ENCODE measurements at regions of chr12 and their contacts with region 1.

Region 1: GRCh38 chr12:4763549-4763948 is 43.3 kb downstream of the GALNT8 start:
- DNase-seq: no peak
- H3K4me3 ChIP-seq: no peak overlapping the region
- H3K4me3 Mint-ChIP-seq: no peak overlapping the region
- H3K27ac Mint-ChIP-seq: no peak overlapping the region
- H3K4me1 ChIP-seq: no peaks in the 10 kb centered on the region
- H3K4me1 Mint-ChIP-seq: no peaks in the 10 kb centered on the region
- H3K27me3 ChIP-seq: no peaks in the 10 kb centered on the region
- H3K27me3 Mint-ChIP-seq: peaks cover 22% of the 10 kb centered on the region
- CTCF ChIP-seq: no peak

Region 2: DNA sequence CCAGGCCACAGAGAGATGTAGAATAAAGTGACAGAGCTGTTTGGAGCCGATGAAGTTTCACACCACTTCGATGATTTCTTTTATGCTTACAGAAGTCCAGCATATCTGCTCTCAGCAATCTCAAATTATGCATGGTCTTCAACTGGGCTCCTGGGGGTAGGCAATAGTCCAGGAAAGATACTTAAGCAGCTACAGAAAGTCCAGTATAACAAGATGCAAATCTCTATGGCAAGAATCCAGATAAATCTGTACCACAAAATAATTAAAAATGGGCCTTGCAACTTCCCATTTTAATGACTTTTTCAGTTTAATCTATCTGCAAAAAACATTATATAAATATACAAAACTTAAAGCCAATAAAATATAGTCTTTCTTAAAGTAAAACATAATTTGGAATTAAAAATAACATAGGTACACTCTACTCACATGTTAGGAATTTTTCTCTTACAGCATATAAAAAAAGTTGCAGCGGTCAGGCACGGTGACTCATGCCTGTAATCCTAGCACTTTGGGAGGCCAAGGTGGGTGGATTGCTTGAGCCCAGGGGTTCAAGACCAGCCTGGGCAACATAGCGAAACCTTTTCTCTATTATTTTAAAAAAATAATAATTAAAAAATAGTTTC is 245.3 kb before region 1 on chr12:
- CTCF ChIA-PET with region 1: no interaction called
- POLR2A ChIA-PET with region 1: no interaction called
- intact Hi-C with region 1: no loop called
- DNase-seq: no peak
- H3K4me3 ChIP-seq: no peak overlapping the region
- H3K4me3 Mint-ChIP-seq: no peak overlapping the region
- H3K27ac Mint-ChIP-seq: no peak overlapping the region
- H3K4me1 ChIP-seq: no peaks in the 10 kb centered on the region
- H3K4me1 Mint-ChIP-seq: no peaks in the 10 kb centered on the region
- H3K27me3 ChIP-seq: no peaks in the 10 kb centered on the region
- H3K27me3 Mint-ChIP-seq: no peaks in the 10 kb centered on the region
- CTCF ChIP-seq: no peak

Region 3: DNA sequence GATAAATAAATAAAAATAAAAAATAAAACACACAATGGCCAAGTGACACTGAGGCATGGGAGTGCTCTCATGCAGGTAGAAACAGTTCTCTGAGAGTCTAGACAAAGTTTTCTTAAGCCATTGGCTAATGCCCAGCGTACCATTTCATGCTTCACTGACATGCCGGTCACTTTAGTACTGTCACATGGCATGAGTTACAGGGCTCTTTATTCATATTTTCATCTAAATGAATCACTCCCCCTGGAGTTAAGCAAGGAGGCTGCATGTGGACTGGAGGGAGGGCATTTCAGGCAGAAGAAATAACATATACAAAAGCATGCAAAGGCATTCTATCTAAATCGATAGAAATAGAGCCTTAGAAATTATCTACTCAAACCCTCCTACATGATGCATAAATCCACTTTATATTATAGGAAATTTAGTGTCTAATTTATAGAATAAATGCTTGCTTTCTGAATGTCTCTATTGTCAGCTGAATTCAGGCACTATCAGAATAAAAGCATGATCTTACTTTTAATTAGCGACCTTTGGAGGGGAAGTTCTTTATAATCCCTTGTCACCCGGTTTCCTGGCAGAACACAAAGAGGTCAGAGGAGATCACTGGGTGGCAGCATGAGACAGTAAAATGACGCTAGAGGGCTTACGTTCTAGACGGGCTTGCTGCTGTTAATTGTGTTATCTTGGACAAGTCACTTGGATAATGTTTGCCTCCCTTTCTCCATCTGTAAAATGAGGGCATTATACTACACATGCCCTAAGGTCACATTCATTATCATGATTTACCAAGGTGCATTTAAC is 184.0 kb before region 1 on chr12:
- CTCF ChIA-PET with region 1: interaction called, 11 read pairs
- POLR2A ChIA-PET with region 1: no interaction called
- intact Hi-C with region 1: loop called (anchors 1 kb)
- DNase-seq: peak; percentile 54 to 55
- H3K4me3 ChIP-seq: no peak overlapping the region
- H3K4me3 Mint-ChIP-seq: no peak overlapping the region
- H3K27ac Mint-ChIP-seq: no peak overlapping the region
- H3K4me1 ChIP-seq: no peaks in the 10 kb centered on the region
- H3K4me1 Mint-ChIP-seq: no peaks in the 10 kb centered on the region
- H3K27me3 ChIP-seq: no peaks in the 10 kb centered on the region; the same call in 1 of the 2 replicates
- H3K27me3 Mint-ChIP-seq: peaks cover 40% of the 10 kb centered on the region
- CTCF ChIP-seq: peak; percentile 59 to 62

Region 4: GRCh38 chr12:4604684-4605193 is 158.8 kb before region 1 on chr12:
- CTCF ChIA-PET with region 1: interaction called, 5 read pairs
- POLR2A ChIA-PET with region 1: no interaction called
- intact Hi-C with region 1: loop called (anchors 1 kb)
- DNase-seq: peak; percentile 69 to 72
- H3K4me3 ChIP-seq: peak overlapping the region; percentile 43
- H3K4me3 Mint-ChIP-seq: peak overlapping the region; percentile 78
- H3K27ac Mint-ChIP-seq: no peak overlapping the region
- H3K4me1 ChIP-seq: peaks cover 13% of the 10 kb centered on the region
- H3K4me1 Mint-ChIP-seq: peaks cover 22% of the 10 kb centered on the region
- H3K27me3 ChIP-seq: no peaks in the 10 kb centered on the region
- H3K27me3 Mint-ChIP-seq: peaks cover 24% of the 10 kb centered on the region
- CTCF ChIP-seq: peak; percentile 94 to 96

Region 5: DNA sequence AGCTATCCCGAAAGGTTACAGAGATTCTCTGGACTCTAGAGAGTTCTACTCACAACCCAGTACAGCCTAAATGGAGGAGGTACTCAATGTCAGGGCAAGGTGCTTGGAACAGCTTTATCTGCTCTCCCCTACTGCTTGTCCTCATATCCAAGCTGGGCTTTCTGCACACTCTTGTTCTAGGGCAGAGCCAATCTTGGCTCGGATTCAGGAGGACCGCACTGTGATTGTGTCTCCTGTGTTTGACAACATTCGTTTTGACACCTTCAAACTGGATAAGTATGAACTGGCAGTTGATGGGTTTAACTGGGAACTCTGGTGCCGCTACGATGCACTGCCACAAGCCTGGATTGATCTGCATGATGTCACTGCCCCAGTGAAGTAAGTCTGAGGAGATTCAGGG is 18.3 kb before region 1 on chr12:
- CTCF ChIA-PET with region 1: interaction called, 11 read pairs
- POLR2A ChIA-PET with region 1: no interaction called
- intact Hi-C with region 1: no loop called
- DNase-seq: no peak
- H3K4me3 ChIP-seq: no peak overlapping the region
- H3K4me3 Mint-ChIP-seq: no peak overlapping the region
- H3K27ac Mint-ChIP-seq: no peak overlapping the region
- H3K4me1 ChIP-seq: no peaks in the 10 kb centered on the region
- H3K4me1 Mint-ChIP-seq: no peaks in the 10 kb centered on the region
- H3K27me3 ChIP-seq: no peaks in the 10 kb centered on the region
- H3K27me3 Mint-ChIP-seq: peaks cover 21% of the 10 kb centered on the region
- CTCF ChIP-seq: no peak

Measured in Caco-2 (cell line).